IMR-90 (cell line): ENCODE measurements at regions of chr2 and their contacts with region 1.

Region 1: DNA sequence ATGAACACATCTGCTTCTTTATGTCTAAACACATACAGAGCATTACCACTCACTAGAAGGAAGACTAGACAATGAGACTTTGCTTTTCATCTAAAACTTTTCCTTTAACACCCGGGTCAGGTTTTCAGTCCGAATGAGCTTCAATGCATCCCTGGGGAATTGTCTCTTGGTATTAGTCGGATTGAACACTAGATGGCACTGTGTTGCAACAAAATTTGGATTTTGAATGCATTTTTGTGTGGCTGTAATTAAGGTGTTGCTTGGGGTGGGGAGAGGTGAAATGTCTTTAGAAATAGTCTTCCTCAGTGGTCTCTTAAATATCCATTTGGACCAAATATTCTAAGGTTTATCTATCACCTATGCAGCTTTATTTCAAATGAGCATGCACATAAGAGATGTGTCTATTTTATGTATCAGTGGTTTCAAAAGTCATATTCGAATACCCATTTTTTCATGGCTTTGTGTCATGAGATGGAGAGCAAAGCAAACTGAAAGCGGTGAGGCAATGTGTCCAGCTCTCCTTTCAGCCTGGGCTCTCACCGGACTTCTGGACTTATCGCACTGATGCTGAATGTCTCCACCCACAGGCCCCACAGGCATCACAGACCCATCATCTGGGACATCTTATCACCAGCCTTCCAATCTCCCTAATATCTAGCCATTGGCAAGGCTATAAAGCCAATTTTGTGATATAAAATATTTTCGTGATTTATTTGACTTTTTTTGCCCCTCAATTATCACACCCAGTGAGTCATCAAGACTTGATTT is 510.3 kb downstream of the RNF144A start:
- DNase-seq: peak; percentile 51
- ATAC-seq: peak; percentile 75
- H3K4me3 ChIP-seq: no peak overlapping the region
- H3K27ac ChIP-seq: no peak overlapping the region
- H3K4me1 ChIP-seq: no peaks in the 10 kb centered on the region
- H3K27me3 ChIP-seq: peaks cover 15% of the 10 kb centered on the region
- CTCF ChIP-seq: peak; percentile 63
- POLR2A ChIP-seq: no peak
- RAD21 ChIP-seq: peak; percentile 77

Region 2: DNA sequence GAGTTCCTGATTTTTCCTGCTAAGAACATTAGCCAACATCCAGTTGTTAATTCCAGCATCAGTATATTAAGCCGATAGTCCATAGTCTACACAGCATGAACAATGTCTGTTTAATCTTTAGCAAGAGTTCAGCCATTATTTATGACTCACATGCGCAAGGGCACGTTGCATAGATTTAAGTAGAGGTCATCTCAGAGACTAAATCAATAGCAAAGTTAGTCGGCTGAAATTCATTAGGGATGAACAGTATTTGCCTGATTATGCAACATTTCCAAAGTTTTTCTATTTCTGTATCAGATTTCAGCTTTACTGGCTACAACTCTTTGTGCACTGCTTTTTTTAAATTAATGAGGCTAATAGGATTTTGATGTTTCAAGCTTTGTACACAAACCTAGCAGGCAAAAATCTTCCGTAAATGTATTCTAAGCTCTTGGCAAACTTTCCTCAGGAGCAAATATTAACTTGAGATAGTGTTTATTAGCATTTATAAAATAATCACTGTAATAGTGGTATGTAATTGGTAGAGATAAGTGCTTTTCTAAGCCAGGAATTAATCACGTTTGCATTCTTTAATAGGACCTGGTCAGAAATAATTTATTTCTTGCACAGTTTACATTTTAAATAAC is 675.7 kb after region 1 on chr2:
- CTCF ChIA-PET with region 1: no interaction called
- POLR2A ChIA-PET with region 1: no interaction called
- dilution Hi-C with region 1: no loop called
- in situ Hi-C with region 1: no loop called
- intact Hi-C with region 1: loop called (anchors 10 kb)
- DNase-seq: peak; percentile 78
- ATAC-seq: peak; percentile 66
- H3K4me3 ChIP-seq: no peak overlapping the region
- H3K27ac ChIP-seq: no peak overlapping the region
- H3K4me1 ChIP-seq: peaks cover 2% of the 10 kb centered on the region; the same call in 1 of the 2 replicates
- H3K27me3 ChIP-seq: no peaks in the 10 kb centered on the region; the same call in 1 of the 2 replicates
- CTCF ChIP-seq: no peak
- POLR2A ChIP-seq: no peak
- RAD21 ChIP-seq: no peak

Region 3: GRCh38 chr2:8754106-8754776 is 1326.8 kb after region 1 on chr2:
- CTCF ChIA-PET with region 1: no interaction called
- POLR2A ChIA-PET with region 1: no interaction called
- dilution Hi-C with region 1: no loop called
- in situ Hi-C with region 1: loop called (anchors 10 kb)
- intact Hi-C with region 1: no loop called
- DNase-seq: peak; percentile 17
- ATAC-seq: peak; percentile 31; the same call in 1 of the 2 replicates
- H3K4me3 ChIP-seq: no peak overlapping the region
- H3K27ac ChIP-seq: no peak overlapping the region
- H3K4me1 ChIP-seq: peaks cover 7% of the 10 kb centered on the region
- H3K27me3 ChIP-seq: no peaks in the 10 kb centered on the region
- CTCF ChIP-seq: no peak
- POLR2A ChIP-seq: no peak
- RAD21 ChIP-seq: no peak